ENCODE measurements at regions of chr1 and their contacts with region 1.

Region 1: GRCh38 chr1:232630047-232630893 is at the start of gene SIPA1L2:
- DNase-seq: peak; percentile 96
- H3K4me3 ChIP-seq: peak within 1 kb of the TSS; percentile 66 to 98 (median 80)
- H3K27ac ChIP-seq: peak within 1 kb of the TSS; percentile 94 to 97 (median 95)
- H3K4me1 ChIP-seq: peaks cover 9 to 59% (median 36%) of the 10 kb centered on the region in 4 donors
- H3K27me3 ChIP-seq: no peaks in the 10 kb centered on the region
- CTCF ChIP-seq: peak; percentile 37 to 68 (median 47)
- EP300 ChIP-seq: no peak
- POLR2A ChIP-seq: peak; percentile 74
- total RNA-seq, gene SIPA1L2: 63.0 to 144 (median 97.8) TPM

Region 2: GRCh38 chr1:231866392-231867331 is 763.6 kb before region 1 on chr1:
- in situ Hi-C with region 1: loop called in 1 of 4 experiments (anchors 10 kb)
- intact Hi-C with region 1: no loop called
- DNase-seq: peak; percentile 53
- H3K4me3 ChIP-seq: no peak overlapping the region
- H3K27ac ChIP-seq: no peak overlapping the region
- H3K4me1 ChIP-seq: peaks cover 0 to 14% (median 2%) of the 10 kb centered on the region in 4 donors
- H3K27me3 ChIP-seq: no peaks in the 10 kb centered on the region
- CTCF ChIP-seq: peak; percentile 78 to 91 (median 85)
- EP300 ChIP-seq: no peak
- POLR2A ChIP-seq: no peak

Region 3: DNA sequence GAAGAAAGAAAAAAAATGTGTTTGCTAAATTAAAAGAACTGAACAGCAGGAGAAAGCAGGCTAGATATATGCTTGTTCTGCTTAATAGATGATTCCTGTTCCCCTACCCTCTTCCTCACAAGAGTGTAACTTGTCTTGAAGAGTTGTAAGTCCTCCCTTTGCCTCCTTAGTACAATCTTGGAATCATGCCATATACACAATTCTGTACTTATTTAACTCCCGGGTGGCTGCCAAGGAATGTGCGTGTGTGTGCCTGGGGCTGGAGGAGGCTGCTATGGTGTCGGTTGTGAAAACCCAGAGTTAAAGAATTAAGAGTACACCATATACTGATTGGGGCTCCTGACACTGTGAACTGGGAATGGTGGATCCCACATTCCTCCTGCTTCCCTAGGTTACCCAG is 194.5 kb before region 1 on chr1:
- in situ Hi-C with region 1: no loop called
- intact Hi-C with region 1: loop called (anchors 10 kb)
- DNase-seq: no peak
- H3K4me3 ChIP-seq: no peak overlapping the region
- H3K27ac ChIP-seq: peak overlapping the region in 2 of 4 donors; percentile 7 to 19
- H3K4me1 ChIP-seq: peaks cover 0 to 7% (median 2%) of the 10 kb centered on the region in 4 donors
- H3K27me3 ChIP-seq: no peaks in the 10 kb centered on the region
- CTCF ChIP-seq: no peak
- EP300 ChIP-seq: no peak
- POLR2A ChIP-seq: no peak

Region 4: DNA sequence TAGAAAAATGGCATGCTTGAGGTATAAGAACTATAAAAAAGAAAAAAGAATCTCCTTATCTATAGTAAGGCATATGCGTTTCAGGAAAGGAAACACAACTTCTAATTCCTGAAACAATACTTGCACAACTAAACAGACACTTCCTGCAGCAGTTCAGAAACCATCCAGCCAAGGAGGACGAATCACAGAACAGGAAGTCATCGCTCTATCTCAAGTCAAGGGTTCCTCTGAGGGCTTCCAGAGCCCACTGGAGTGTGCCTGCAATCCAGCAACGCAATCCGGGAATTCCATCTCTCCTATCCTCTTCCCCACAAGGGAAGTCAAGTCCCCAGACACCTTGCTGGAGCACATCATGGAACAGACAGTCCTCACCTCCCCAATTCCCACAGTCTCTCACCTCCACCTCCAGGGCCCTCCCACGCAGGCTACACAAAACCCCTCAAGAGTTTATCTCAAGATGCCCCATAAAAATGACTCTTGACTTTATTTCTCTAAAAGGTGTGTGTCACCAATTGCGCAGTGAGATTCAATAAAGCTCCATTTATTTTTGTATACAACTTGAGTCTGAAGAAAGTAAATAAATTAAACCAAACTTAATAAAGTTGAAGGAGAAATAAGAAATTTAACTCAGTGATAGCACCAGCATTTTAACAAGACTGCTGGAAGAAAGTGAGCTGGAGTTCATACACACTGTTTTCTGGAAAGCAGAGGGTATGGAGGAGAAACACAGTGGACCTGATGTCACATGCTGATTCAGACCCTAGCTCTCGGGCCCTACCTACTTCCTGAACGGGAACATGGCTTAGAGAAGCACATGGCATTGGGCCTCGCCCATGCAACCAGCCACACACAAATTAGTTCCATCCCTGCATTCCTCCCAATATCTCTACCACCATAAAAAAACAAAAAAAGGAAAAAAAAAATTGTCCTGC is 40.2 kb before region 1 on chr1:
- in situ Hi-C with region 1: no loop called
- intact Hi-C with region 1: no loop called
- DNase-seq: no peak
- H3K4me3 ChIP-seq: no peak overlapping the region
- H3K27ac ChIP-seq: peak overlapping the region; percentile 16 to 61 (median 36)
- H3K4me1 ChIP-seq: peaks cover 0 to 31% (median 4%) of the 10 kb centered on the region in 4 donors
- H3K27me3 ChIP-seq: no peaks in the 10 kb centered on the region
- CTCF ChIP-seq: no peak
- EP300 ChIP-seq: no peak
- POLR2A ChIP-seq: no peak

Region 5: GRCh38 chr1:232880354-232880753 is 250.1 kb after region 1 on chr1:
- in situ Hi-C with region 1: no loop called
- intact Hi-C with region 1: no loop called
- DNase-seq: peak; percentile 53
- H3K4me3 ChIP-seq: no peak overlapping the region
- H3K27ac ChIP-seq: no peak overlapping the region
- H3K4me1 ChIP-seq: no peaks in the 10 kb centered on the region
- H3K27me3 ChIP-seq: no peaks in the 10 kb centered on the region
- CTCF ChIP-seq: peak; percentile 20 to 55 (median 46)
- EP300 ChIP-seq: no peak
- POLR2A ChIP-seq: no peak

Region 6: GRCh38 chr1:232950197-232951176 is 320.2 kb after region 1 on chr1 and contains the start of gene NTPCR:
- in situ Hi-C with region 1: loop called in 3 of 4 experiments (anchors 10 to 25 kb)
- intact Hi-C with region 1: no loop called
- DNase-seq: peak; percentile 97
- H3K4me3 ChIP-seq: peak within 1 kb of the TSS; percentile 69 to 95 (median 86)
- H3K27ac ChIP-seq: peak within 1 kb of the TSS; percentile 84 to 92 (median 88)
- H3K4me1 ChIP-seq: peaks cover 0 to 31% (median 19%) of the 10 kb centered on the region in 4 donors
- H3K27me3 ChIP-seq: no peaks in the 10 kb centered on the region
- CTCF ChIP-seq: peak in 3 of 5 experiments; percentile 17 to 42 (median 19)
- EP300 ChIP-seq: no peak
- POLR2A ChIP-seq: peak; percentile 37
- total RNA-seq, gene NTPCR: 13.5 to 53.3 (median 37.2) TPM

Region 7: DNA sequence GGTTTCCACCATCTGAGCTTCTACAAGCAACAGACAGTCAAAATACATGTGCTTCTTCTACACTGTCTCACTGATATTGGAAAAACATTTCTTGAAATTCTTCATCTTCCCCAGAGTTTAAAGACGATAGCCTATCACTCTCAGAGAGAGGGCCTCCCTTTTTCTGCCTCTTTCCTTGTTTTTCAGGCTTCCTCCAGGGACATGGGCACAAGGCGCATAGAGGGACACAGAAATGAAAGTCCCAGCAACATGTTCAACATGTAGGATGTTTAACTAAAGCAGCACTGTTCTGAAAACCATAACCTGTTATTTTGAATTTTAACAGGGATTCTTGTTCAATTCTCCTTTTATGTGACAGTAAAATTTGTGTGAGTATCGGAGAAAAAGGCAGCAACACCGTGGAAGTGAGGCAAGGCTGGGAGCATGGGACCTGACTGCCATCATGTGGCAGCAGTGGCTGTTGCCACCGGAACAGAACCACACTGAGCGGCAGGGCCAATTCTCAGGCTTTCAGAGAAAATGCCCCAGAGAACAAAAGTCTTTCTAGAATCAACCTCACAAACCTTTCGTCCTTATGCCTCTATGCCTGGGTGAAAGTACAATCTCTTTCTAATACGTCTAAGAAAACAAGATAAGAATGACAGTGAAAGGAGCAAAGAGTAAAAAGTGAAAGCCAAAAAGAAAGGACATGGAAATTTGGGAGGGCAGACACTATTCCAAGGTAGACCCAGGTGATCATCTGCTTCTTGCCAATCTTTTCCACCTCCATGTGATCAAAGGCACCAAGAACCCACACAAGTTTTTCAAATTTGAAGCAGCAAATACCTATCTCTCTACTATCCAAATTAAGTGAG is 610.8 kb after region 1 on chr1:
- in situ Hi-C with region 1: loop called (anchors 25 kb)
- intact Hi-C with region 1: loop called (anchors 10 kb)
- DNase-seq: peak; percentile 73
- H3K4me3 ChIP-seq: no peak overlapping the region
- H3K27ac ChIP-seq: peak overlapping the region; percentile 54 to 82 (median 80)
- H3K4me1 ChIP-seq: peaks cover 14 to 36% (median 25%) of the 10 kb centered on the region in 4 donors
- H3K27me3 ChIP-seq: no peaks in the 10 kb centered on the region
- CTCF ChIP-seq: peak; percentile 72 to 82 (median 78)
- EP300 ChIP-seq: no peak
- POLR2A ChIP-seq: no peak

Measured in transverse colon (tissue), 4 donors.